Uterus (tissue), 4 donors: ENCODE measurements at regions of chr1 and their contacts with region 1.

Region 1: DNA sequence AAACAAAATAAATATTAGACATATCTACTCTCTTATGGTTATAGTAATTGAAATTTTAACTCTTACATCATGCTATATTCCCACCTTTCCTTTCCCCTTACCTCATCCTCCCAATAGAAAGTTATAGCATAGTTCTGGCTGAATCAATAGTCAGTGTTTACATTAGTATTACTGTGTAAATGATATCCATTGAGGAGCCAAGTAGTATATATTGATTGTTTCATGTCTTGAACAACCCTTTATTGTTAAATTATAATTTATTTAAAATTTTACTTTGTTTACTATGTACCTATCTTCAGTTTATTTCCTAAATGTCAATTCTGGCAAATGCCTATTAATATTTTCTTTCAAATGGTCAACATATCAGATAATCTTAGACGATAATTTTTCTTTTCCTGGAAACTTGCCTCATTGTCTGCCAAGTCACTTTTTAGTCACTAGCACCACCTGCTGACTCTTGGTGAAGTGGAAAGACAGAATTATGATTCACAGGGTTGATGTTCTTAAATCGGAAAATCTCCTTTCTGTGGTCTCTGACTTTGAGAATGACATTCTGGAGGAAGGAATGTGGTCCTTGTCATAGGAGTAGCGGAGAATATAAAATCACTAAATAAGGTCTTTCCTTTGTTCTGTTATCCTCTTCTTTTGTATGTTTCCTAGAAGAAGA is 8.7 kb downstream of the HJV start:
- DNase-seq: peak in 1 of 2 donors; percentile 70
- H3K4me3 ChIP-seq: no peak overlapping the region
- H3K27ac ChIP-seq: no peak overlapping the region
- H3K4me1 ChIP-seq: no peaks in the 10 kb centered on the region
- H3K27me3 ChIP-seq: no peaks in the 10 kb centered on the region
- CTCF ChIP-seq: peak; percentile 75 to 95 (median 90)
- POLR2A ChIP-seq: no peak

Region 2: DNA sequence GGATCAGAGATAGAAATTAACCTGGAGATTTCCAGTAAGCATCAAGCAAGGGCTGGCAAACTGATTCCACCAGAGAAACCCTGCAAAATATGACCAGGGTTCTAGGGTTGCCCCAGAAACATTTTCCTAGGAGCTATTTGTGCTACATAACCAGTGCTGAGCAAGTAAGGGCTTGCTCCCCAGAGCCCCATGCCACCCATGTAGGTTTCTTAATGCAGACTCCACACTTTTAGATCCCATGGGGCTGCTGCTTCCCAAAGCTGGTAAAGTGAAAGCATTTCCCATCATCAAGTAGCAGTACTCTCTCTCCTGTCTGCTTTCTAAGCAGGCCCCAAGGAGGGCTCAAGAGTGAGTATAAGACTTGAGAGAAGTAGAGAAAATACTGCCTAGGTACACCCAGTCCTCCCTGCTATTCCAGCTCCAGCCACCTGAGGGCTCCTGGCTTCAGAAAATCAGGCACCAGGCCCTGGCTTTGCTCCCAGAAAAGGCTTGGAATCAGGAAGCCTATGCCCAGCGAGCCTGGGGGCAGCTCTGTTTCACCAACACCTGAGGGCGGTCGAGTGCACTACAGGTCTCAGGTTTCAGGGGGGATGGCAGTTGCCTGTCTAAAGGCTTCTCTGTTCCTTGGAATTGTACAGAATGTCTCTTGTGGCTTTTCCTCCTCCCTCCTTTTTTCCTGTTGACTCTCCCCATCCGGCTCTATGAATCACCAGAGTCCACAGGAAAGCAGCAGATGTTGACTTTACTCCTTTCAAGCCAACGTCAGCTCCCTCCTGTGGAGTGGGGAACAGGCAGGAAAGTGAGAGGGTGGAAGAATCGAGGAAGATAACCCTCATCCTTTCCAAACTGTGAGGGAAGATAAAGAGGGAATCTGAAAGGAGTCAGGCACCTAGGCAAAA is 121.0 kb before region 1 on chr1:
- intact Hi-C with region 1: loop called (anchors 10 kb)
- DNase-seq: peak; percentile 95 to 99
- H3K4me3 ChIP-seq: peak overlapping the region; percentile 2 to 13
- H3K27ac ChIP-seq: peak overlapping the region; percentile 95 to 96
- H3K4me1 ChIP-seq: peaks cover 5 to 8% of the 10 kb centered on the region in 2 donors
- H3K27me3 ChIP-seq: no peaks in the 10 kb centered on the region
- CTCF ChIP-seq: peak; percentile 91 to 98 (median 98)
- POLR2A ChIP-seq: peak; percentile 32 to 59

Region 3: DNA sequence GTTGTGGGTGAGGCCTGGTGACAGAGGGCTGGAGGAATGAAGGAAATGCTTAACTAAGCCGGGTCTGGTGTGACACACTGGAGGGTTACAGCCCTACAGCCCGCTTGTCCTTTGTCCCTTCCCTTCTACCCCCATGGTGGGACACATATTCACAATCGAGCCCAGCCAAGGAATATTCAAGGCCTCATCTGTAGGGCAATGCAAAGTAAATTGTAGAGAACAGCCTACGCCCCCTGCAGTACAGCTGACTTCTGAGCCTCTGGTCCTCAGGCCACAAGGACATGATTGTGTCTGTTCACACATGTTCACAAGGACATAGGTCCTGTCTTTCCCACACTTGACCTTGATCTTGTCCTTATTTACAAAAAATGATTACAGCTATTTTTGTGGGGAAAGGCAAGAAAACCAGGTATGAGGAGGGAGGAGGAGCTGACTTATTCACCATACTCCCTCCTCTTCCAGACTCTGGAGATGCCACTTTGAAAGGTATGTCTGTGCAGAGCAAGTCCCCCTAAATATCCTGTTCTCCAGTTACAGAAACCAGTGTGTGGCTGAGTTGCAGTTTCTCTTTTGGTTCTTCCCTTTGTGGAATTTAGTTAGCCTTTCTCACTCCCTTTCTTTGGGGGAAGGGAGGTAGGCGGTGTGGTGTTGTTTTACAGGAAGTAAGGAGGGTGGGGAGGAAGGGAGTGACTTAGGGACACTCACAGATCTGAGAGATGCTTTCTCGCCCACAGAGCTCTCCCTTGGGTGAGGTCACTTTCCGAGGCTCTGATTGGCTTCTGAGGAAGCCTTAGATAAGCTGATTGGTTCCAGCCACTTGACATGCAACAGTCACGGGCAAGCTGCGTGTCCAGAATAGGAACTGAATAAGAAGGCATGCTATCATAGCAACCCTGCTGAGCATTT is 33.8 kb before region 1 on chr1:
- intact Hi-C with region 1: loop called (anchors 5 kb)
- DNase-seq: peak; percentile 91 to 98
- H3K4me3 ChIP-seq: peak overlapping the region; percentile 22 to 28
- H3K27ac ChIP-seq: peak overlapping the region; percentile 96 to 100
- H3K4me1 ChIP-seq: peaks cover 12 to 27% of the 10 kb centered on the region in 2 donors
- H3K27me3 ChIP-seq: no peaks in the 10 kb centered on the region
- CTCF ChIP-seq: peak; percentile 4 to 19 (median 10)
- POLR2A ChIP-seq: peak; percentile 91